GM12878 (cell line): ENCODE measurements at regions of chr12 and their contacts with region 1.

Region 1: DNA sequence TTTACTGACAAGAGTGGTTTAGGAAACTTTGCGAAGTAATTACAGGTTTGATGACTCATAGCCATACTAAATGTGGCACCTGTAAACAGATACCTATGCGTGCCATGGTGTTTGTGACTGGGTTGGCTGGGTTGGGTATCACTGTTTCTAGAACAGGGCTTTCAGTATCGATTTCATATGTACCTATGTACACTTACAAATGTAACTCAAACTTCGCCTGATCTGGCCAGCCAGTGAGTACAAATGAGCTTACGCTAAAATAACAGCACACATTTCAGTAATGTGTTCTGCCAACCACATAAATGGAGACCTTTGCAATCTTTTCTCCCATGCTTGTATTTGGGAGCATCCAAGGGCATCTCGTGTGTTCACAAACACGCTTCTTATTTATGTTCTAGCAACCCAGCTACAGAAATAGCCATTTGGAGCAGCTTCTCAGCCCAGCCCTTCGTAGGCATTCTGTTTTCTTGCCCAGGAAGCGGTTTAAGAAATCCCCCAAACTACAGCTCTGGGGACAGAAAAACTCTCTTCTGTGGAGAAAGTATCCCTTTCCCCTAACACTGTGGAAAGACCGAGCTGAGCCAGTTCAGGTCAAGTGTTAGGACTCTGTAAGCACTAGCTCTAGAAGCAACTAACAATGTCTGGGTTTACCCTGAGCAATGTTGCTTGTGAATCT is 42.3 kb upstream of the MDM1 start:
- DNase-seq: peak; percentile 98
- ATAC-seq: peak; percentile 88
- H3K4me3 ChIP-seq: peak overlapping the region; percentile 4; the same call in 1 of the 2 replicates
- H3K27ac ChIP-seq: peak overlapping the region; percentile 82
- H3K4me1 ChIP-seq: peaks cover 34% of the 10 kb centered on the region
- H3K27me3 ChIP-seq: no peaks in the 10 kb centered on the region
- CTCF ChIP-seq: no peak
- EP300 ChIP-seq: peak; percentile 97 to 98
- POLR2A ChIP-seq: no peak
- RAD21 ChIP-seq: no peak

Region 2: GRCh38 chr12:68358532-68359485 is 15.6 kb before region 1 on chr12:
- CTCF ChIA-PET with region 1: interaction called, 25 read pairs
- POLR2A ChIA-PET with region 1: interaction called, 31 read pairs
- RAD21 ChIA-PET with region 1: interaction called, 47 read pairs
- SMC1A ChIA-PET with region 1: interaction called, 108 read pairs
- in situ Hi-C with region 1: no loop called
- intact Hi-C with region 1: no loop called
- DNase-seq: peak; percentile 74
- ATAC-seq: peak; percentile 90
- H3K4me3 ChIP-seq: no peak overlapping the region
- H3K27ac ChIP-seq: peak overlapping the region; percentile 72
- H3K4me1 ChIP-seq: peaks cover 14% of the 10 kb centered on the region
- H3K27me3 ChIP-seq: no peaks in the 10 kb centered on the region
- CTCF ChIP-seq: peak; percentile 56 to 69 (median 66)
- EP300 ChIP-seq: peak; percentile 83; a peak in 3 of 4 replicates
- POLR2A ChIP-seq: no peak
- RAD21 ChIP-seq: peak; percentile 83

Region 3: GRCh38 chr12:68393417-68393816 is 19.0 kb after region 1 on chr12:
- CTCF ChIA-PET with region 1: interaction called, 9 read pairs
- POLR2A ChIA-PET with region 1: interaction called, 11 read pairs
- RAD21 ChIA-PET with region 1: interaction called, 9 read pairs
- SMC1A ChIA-PET with region 1: interaction called, 97 read pairs
- in situ Hi-C with region 1: no loop called
- intact Hi-C with region 1: no loop called
- DNase-seq: no peak
- ATAC-seq: no peak
- H3K4me3 ChIP-seq: no peak overlapping the region
- H3K27ac ChIP-seq: no peak overlapping the region
- H3K4me1 ChIP-seq: no peaks in the 10 kb centered on the region
- H3K27me3 ChIP-seq: no peaks in the 10 kb centered on the region
- CTCF ChIP-seq: no peak
- EP300 ChIP-seq: no peak
- POLR2A ChIP-seq: no peak
- RAD21 ChIP-seq: no peak

Region 4: GRCh38 chr12:68411371-68411770 is 36.9 kb after region 1 on chr12:
- CTCF ChIA-PET with region 1: interaction called, 6 read pairs
- POLR2A ChIA-PET with region 1: interaction called, 6 read pairs
- RAD21 ChIA-PET with region 1: interaction called, 11 read pairs
- SMC1A ChIA-PET with region 1: interaction called, 42 read pairs
- in situ Hi-C with region 1: no loop called
- intact Hi-C with region 1: no loop called
- DNase-seq: no peak
- ATAC-seq: no peak
- H3K4me3 ChIP-seq: no peak overlapping the region
- H3K27ac ChIP-seq: no peak overlapping the region
- H3K4me1 ChIP-seq: no peaks in the 10 kb centered on the region
- H3K27me3 ChIP-seq: no peaks in the 10 kb centered on the region
- CTCF ChIP-seq: no peak
- EP300 ChIP-seq: no peak
- POLR2A ChIP-seq: no peak
- RAD21 ChIP-seq: no peak

Region 5: GRCh38 chr12:68440068-68440581 is 65.7 kb after region 1 on chr12:
- CTCF ChIA-PET with region 1: interaction called, 11 read pairs
- POLR2A ChIA-PET with region 1: interaction called, 63 read pairs
- RAD21 ChIA-PET with region 1: interaction called, 43 read pairs
- SMC1A ChIA-PET with region 1: interaction called, 153 read pairs
- in situ Hi-C with region 1: no loop called
- intact Hi-C with region 1: loop called (anchors 5 kb)
- DNase-seq: no peak
- ATAC-seq: peak; percentile 38
- H3K4me3 ChIP-seq: no peak overlapping the region
- H3K27ac ChIP-seq: no peak overlapping the region
- H3K4me1 ChIP-seq: peaks cover 7% of the 10 kb centered on the region
- H3K27me3 ChIP-seq: no peaks in the 10 kb centered on the region
- CTCF ChIP-seq: no peak
- EP300 ChIP-seq: no peak
- POLR2A ChIP-seq: no peak
- RAD21 ChIP-seq: no peak

Region 6: GRCh38 chr12:68514807-68515410 is 140.5 kb after region 1 on chr12:
- CTCF ChIA-PET with region 1: no interaction called
- POLR2A ChIA-PET with region 1: no interaction called
- RAD21 ChIA-PET with region 1: no interaction called
- SMC1A ChIA-PET with region 1: no interaction called
- in situ Hi-C with region 1: no loop called
- intact Hi-C with region 1: no loop called
- DNase-seq: no peak
- ATAC-seq: no peak
- H3K4me3 ChIP-seq: no peak overlapping the region
- H3K27ac ChIP-seq: no peak overlapping the region
- H3K4me1 ChIP-seq: no peaks in the 10 kb centered on the region
- H3K27me3 ChIP-seq: no peaks in the 10 kb centered on the region
- CTCF ChIP-seq: no peak
- EP300 ChIP-seq: no peak
- POLR2A ChIP-seq: no peak
- RAD21 ChIP-seq: no peak

Region 7: DNA sequence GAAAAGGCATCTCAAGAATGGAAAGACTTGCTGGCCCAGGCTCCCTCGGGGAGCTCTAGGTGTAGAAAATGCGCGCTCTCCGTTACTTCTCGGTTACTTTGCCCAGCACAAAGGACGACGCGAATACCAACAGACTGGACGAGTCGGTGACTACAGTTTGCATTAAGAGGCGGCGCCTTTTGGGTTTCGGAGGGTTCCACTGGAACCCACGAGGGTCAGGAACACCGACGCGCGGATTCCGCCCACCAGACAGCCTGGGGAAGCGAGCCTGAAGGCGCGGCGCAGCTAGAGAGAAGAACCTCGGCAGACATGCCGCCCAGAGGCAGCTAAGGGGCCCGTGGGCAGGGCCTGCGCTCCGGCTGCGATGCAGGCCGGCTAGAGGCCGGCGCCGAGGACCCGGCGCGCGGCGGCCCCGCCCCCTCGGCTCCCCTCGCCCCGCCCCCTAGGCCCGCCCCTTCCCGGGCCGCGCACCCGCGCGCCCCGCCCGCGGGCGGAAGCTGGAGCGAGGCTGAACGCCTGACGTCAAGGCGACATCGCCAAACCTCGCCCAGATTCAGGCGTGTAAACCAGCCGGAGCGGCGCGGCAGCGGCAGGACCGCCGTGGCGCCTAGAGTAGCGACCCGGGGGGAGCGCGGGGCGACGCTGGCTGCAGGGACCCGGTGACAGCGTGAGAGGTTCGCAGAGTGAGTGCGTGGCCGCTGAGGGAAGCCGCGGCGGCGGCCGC is 236.1 kb after region 1 on chr12 and contains the start of gene RAP1B:
- CTCF ChIA-PET with region 1: no interaction called
- POLR2A ChIA-PET with region 1: interaction called, 4 read pairs
- RAD21 ChIA-PET with region 1: interaction called, 8 read pairs
- SMC1A ChIA-PET with region 1: interaction called, 25 read pairs
- in situ Hi-C with region 1: loop called (anchors 25 kb)
- intact Hi-C with region 1: no loop called
- DNase-seq: no peak
- ATAC-seq: peak; percentile 84
- H3K4me3 ChIP-seq: peak within 1 kb of the TSS; percentile 86
- H3K27ac ChIP-seq: peak within 1 kb of the TSS; percentile 98
- H3K4me1 ChIP-seq: peaks cover 4% of the 10 kb centered on the region; the same call in 1 of the 2 replicates
- H3K27me3 ChIP-seq: no peaks in the 10 kb centered on the region
- CTCF ChIP-seq: no peak
- EP300 ChIP-seq: no peak
- POLR2A ChIP-seq: peak; percentile 96
- RAD21 ChIP-seq: no peak
- polyA plus RNA-seq, gene RAP1B: 88.9 to 95.0 TPM